GM10248 (cell line): ENCODE measurements at regions of chr6 and their contacts with region 1.

Region 1: GRCh38 chr6:10954590-10955010 is 67.7 kb downstream of the SYCP2L start:
- DNase-seq: peak; percentile 72
- CTCF ChIP-seq: peak; percentile 94

Region 2: DNA sequence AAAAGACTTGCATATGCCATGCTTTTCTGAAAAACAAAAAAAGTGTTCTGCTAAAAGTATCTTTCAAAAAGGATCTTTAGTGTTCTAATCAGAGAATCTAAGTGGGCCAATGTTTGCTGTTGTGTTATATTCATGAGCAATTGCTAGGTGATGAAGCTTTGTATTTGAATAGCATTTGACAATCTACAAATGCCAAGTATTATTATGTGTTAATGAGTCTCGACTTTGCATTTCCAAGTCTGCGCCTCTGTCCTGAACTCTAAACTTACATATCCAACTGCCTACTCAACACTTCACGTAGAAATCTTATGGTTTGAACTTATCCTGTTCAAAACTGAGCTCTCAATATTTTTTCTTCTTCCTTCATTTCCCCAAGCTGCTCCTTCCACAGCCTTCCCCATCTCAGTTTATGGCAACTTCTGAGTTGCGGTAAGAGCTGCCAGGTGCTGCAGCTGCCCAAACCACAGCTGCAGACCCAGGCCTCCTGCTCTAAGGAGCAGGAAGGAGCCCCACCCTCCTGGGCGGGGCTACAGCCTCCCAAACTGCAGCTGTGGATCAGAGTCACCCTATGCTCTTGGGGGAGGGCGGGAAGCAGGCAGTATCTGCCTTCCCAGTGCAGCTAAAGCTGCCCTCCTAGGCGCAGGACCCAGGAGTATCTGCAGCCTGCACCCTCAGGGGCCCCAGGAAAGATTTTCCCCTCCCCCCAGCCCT is 99.5 kb before region 1 on chr6:
- CTCF ChIA-PET with region 1: no interaction called
- POLR2A ChIA-PET with region 1: no interaction called
- DNase-seq: no peak
- CTCF ChIP-seq: no peak

Region 3: DNA sequence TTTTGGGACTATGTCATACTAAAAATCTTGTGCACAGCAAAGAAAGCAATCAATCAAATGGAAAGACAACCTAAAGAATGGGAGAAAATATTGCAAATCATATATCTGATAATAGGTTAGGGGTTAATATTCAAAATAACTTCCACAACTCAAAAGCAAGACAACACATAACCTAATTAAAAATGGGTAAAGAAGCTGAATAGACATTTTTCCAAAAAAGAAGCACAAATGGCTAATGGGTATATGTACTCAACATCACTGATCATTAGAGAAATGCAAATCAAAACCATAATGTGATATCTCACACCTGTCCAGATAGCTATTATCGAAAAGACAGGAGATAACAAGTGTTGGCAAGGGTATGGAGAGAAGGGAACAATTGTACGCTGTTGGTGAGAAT is 14.8 kb before region 1 on chr6:
- CTCF ChIA-PET with region 1: interaction called, 12 read pairs
- POLR2A ChIA-PET with region 1: no interaction called
- DNase-seq: no peak
- CTCF ChIP-seq: no peak

Region 4: DNA sequence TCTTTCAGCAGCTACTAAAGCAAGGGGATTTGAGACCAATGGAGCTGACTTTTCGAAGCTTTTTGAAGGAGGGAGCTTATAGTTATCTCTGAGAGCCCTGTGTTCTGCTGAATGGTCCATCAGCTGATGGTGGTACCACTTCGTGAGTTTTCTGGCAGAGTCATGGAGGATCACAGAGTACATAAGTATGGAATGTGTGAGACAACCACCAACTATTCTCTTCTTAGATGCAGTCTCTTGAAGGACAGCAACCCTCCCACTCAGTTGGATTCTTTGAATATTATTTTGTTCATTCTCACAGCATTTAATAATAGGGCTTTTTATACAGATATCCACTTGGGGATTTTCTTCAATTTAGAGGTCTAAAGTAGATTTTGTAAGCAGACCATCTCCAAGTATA is 14.2 kb after region 1 on chr6:
- CTCF ChIA-PET with region 1: interaction called, 17 read pairs
- POLR2A ChIA-PET with region 1: no interaction called
- DNase-seq: no peak
- CTCF ChIP-seq: no peak

Region 5: DNA sequence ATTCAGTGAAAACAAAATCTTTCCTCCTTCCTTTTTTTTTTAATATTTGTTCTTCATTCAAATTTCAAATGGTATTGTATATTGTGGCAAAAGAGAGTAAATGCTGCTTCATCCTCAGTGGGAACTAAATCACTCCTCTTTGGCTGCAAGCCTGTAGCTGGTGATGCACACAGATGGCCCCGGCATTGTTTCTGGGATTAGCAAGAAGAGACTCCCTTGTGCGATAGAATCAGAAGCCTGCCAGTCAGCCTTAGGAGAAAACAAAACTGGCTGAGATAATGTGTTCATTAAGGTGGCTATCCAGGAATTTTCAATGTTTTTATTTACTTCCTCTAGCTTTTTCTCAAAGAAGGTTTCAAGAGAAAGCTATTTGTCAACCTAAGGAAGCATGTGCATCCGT is 110.2 kb after region 1 on chr6:
- CTCF ChIA-PET with region 1: interaction called, 79 read pairs
- POLR2A ChIA-PET with region 1: no interaction called
- DNase-seq: no peak
- CTCF ChIP-seq: no peak

Region 6: DNA sequence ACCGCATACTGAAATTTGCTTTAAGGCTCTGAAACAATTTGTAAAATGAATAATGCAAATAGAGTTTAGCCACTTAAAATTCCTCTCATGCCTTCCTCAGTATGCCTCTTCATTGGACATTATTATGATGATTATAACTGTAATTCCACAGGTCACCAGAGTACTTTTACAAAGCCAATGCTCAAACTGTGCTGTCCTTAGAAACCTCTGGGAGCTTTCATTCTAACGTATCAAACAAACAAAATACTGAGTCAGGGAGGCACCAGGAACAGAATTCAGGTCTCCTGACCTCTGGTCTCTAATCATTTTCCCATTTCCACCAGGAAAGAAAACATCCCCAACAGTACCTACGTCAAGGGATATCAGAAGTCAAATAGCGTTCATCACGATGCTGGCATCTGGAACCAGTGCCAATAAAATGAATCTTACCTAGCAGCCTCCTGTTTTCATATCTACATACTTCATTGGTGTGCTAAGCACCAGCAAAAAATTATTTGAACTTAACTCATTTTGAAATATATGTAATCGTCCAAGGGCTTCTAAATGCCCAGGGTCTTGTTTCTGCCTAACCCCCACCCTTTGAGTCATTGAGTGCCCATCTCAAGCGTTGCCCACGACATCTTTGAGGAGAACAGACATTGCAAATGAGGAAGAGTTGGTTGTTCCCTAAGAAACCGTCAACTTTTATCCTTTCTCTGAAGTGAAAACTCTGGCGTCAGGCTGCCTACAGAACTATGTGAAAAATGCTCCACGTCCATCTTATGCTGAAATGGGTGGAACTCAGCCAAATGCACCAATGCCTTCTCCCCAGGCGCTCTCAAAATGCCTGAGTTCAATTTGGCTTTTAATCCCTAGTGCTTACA is 240.0 kb after region 1 on chr6:
- CTCF ChIA-PET with region 1: no interaction called
- POLR2A ChIA-PET with region 1: no interaction called
- DNase-seq: no peak
- CTCF ChIP-seq: no peak